Caco-2 (cell line): ENCODE measurements at regions of chr15 and their contacts with region 1.

Region 1: GRCh38 chr15:52227456-52227855 is 36.3 kb upstream of the GNB5 start:
- DNase-seq: peak; percentile 62 to 69
- H3K4me3 ChIP-seq: no peak overlapping the region
- H3K4me3 Mint-ChIP-seq: no peak overlapping the region
- H3K27ac Mint-ChIP-seq: no peak overlapping the region
- H3K4me1 ChIP-seq: no peaks in the 10 kb centered on the region
- H3K4me1 Mint-ChIP-seq: peaks cover 8% of the 10 kb centered on the region
- H3K27me3 ChIP-seq: no peaks in the 10 kb centered on the region
- H3K27me3 Mint-ChIP-seq: no peaks in the 10 kb centered on the region
- CTCF ChIP-seq: peak; percentile 70 to 73

Region 2: DNA sequence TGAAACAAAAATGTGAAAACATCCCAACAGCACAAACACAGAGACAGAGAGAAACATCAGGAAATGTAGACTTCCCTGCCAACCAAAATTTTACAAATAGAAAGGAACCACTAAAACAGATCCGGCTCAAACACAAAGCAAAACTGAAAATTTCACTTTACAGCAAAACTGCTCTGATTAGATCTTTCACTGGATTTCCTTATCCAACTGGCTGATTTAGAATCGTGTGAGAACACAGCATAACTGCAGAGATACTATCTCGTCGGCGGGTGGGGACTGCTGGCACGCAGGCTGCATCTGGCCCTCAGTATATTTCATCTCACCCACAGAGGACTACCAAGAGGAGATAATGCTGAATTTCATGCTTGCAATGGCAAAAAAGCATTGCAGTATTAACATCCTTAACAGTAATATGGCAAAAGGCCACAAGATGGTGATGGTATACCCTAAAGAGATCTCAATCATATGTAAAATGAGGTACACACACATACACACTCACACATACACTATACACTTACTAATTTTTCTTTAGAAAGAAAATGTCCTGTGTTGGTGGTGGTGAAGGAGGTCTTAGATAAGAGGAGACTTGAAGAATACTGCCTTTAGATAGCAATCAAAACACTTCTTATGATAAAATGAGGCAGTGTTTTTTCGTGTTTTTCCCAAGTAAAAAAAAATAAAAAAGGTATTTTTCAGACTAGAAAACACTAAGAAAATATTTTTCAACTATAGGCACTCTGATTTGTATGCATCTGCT is 245.3 kb before region 1 on chr15:
- CTCF ChIA-PET with region 1: no interaction called
- POLR2A ChIA-PET with region 1: no interaction called
- intact Hi-C with region 1: loop called (anchors 5 kb)
- DNase-seq: peak in 1 of 2 experiments; percentile 47
- H3K4me3 ChIP-seq: no peak overlapping the region
- H3K4me3 Mint-ChIP-seq: peak overlapping the region; percentile 27
- H3K27ac Mint-ChIP-seq: peak overlapping the region; percentile 42
- H3K4me1 ChIP-seq: no peaks in the 10 kb centered on the region
- H3K4me1 Mint-ChIP-seq: peaks cover 8% of the 10 kb centered on the region
- H3K27me3 ChIP-seq: no peaks in the 10 kb centered on the region
- H3K27me3 Mint-ChIP-seq: no peaks in the 10 kb centered on the region
- CTCF ChIP-seq: peak; percentile 39 to 51

Region 3: GRCh38 chr15:52050416-52050815 is 177.0 kb before region 1 on chr15:
- CTCF ChIA-PET with region 1: no interaction called
- POLR2A ChIA-PET with region 1: no interaction called
- intact Hi-C with region 1: no loop called
- DNase-seq: no peak
- H3K4me3 ChIP-seq: no peak overlapping the region
- H3K4me3 Mint-ChIP-seq: no peak overlapping the region
- H3K27ac Mint-ChIP-seq: no peak overlapping the region
- H3K4me1 ChIP-seq: peaks cover 4% of the 10 kb centered on the region
- H3K4me1 Mint-ChIP-seq: no peaks in the 10 kb centered on the region
- H3K27me3 ChIP-seq: no peaks in the 10 kb centered on the region
- H3K27me3 Mint-ChIP-seq: no peaks in the 10 kb centered on the region
- CTCF ChIP-seq: no peak

Region 4: GRCh38 chr15:52179278-52180195 is 47.9 kb before region 1 on chr15:
- CTCF ChIA-PET with region 1: interaction called, 8 read pairs
- POLR2A ChIA-PET with region 1: interaction called, 3 read pairs
- intact Hi-C with region 1: loop called (anchors 1 kb)
- DNase-seq: peak; percentile 80 to 85
- H3K4me3 ChIP-seq: peak overlapping the region; percentile 88
- H3K4me3 Mint-ChIP-seq: peak overlapping the region; percentile 97
- H3K27ac Mint-ChIP-seq: peak overlapping the region; percentile 88
- H3K4me1 ChIP-seq: peaks cover 11% of the 10 kb centered on the region
- H3K4me1 Mint-ChIP-seq: peaks cover 3% of the 10 kb centered on the region
- H3K27me3 ChIP-seq: no peaks in the 10 kb centered on the region
- H3K27me3 Mint-ChIP-seq: no peaks in the 10 kb centered on the region
- CTCF ChIP-seq: no peak

Region 5: DNA sequence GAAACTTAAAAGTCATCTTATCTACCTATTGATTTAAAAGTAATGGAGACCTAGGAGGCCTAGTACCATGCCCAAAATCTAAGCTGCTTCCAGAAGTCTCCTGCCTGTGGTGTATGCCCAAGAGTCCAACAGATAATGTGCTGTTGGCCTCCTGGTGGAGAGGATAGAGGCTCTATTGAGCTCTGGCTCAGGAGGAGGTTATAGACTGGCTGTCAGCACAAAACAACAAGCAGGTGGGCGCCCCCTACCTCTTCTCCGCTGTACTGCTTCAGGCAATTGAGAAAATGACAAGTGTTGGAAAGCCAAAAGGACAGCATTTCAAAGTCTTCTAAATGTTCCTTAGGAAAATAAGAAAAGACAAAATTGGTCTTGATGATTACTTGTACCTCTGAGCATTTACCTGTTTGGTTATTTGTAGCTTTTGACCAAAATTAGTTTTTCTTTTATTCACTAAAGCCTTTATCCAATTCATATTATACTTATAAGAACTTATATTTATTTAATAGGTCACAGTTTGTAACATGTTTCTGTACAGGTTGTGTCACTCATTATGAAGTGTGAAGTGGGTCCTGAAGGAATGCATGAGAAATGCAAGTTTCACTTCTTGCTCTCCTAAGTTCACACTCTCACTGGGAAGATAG is 19.0 kb before region 1 on chr15:
- CTCF ChIA-PET with region 1: interaction called, 12 read pairs
- POLR2A ChIA-PET with region 1: no interaction called
- intact Hi-C with region 1: no loop called
- DNase-seq: peak; percentile 76 to 83
- H3K4me3 ChIP-seq: no peak overlapping the region
- H3K4me3 Mint-ChIP-seq: no peak overlapping the region
- H3K27ac Mint-ChIP-seq: no peak overlapping the region
- H3K4me1 ChIP-seq: no peaks in the 10 kb centered on the region
- H3K4me1 Mint-ChIP-seq: no peaks in the 10 kb centered on the region
- H3K27me3 ChIP-seq: no peaks in the 10 kb centered on the region
- H3K27me3 Mint-ChIP-seq: no peaks in the 10 kb centered on the region
- CTCF ChIP-seq: peak; percentile 75 to 82

Region 6: GRCh38 chr15:52217186-52217585 is 10.3 kb before region 1 on chr15:
- CTCF ChIA-PET with region 1: interaction called, 16 read pairs
- POLR2A ChIA-PET with region 1: no interaction called
- intact Hi-C with region 1: no loop called
- DNase-seq: peak in 1 of 2 experiments; percentile 53
- H3K4me3 ChIP-seq: no peak overlapping the region
- H3K4me3 Mint-ChIP-seq: no peak overlapping the region
- H3K27ac Mint-ChIP-seq: no peak overlapping the region
- H3K4me1 ChIP-seq: no peaks in the 10 kb centered on the region
- H3K4me1 Mint-ChIP-seq: no peaks in the 10 kb centered on the region
- H3K27me3 ChIP-seq: no peaks in the 10 kb centered on the region
- H3K27me3 Mint-ChIP-seq: no peaks in the 10 kb centered on the region
- CTCF ChIP-seq: peak; percentile 33 to 55